ENCODE measurements at regions of chr11 and their contacts with region 1.

Region 1: DNA sequence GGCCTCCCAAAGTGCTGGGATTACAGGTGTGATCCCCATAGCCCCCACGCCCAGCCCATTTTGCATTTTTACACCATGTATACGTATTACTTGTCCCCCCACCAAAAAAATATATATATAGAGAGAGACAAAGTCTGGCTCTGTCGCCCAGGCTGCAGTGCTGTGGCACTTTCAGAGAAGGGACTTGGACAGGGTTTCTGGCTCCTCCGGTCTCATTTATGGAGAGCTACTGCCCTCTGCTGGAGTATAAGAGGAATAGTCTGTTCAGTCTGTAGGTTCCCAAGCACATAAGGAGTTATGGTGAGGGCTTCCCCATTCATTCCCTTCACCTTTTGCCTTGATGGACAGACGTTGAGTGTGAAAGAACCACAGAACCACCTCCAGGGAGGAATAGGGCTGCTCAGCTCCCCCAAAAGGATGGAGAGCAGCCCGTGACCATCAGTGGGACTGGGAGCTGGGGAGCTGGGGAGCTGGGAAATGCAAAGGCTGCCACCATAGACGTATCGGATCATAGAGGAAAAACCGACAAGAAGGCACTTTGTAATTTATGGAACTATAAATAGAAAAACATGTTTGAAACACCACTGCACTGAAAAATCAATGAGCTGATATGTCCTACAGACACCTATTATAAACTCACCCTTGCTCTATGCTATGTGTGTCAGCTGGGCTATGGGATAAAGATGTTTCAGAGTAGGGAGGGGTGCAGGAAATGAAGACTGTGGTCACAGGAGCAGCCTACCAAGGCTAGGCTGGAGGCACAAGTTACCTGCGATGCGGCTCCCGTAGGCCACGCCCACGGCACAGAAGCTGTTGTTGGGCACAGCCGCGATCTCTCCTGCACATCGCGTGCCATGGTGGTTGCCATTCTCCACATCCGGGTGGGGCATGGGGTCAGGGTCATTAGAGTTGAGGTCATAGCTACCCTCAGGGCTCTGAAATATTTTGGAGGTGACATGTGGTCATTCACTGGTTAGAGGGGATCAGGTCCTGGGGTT is 5.2 kb downstream of the PCSK7 start:
- DNase-seq: peak; percentile 90
- H3K4me3 ChIP-seq: no peak overlapping the region
- H3K27ac ChIP-seq: no peak overlapping the region
- H3K4me1 ChIP-seq: peaks cover 20% of the 10 kb centered on the region
- H3K27me3 ChIP-seq: no peaks in the 10 kb centered on the region
- CTCF ChIP-seq: peak; percentile 91

Region 2: DNA sequence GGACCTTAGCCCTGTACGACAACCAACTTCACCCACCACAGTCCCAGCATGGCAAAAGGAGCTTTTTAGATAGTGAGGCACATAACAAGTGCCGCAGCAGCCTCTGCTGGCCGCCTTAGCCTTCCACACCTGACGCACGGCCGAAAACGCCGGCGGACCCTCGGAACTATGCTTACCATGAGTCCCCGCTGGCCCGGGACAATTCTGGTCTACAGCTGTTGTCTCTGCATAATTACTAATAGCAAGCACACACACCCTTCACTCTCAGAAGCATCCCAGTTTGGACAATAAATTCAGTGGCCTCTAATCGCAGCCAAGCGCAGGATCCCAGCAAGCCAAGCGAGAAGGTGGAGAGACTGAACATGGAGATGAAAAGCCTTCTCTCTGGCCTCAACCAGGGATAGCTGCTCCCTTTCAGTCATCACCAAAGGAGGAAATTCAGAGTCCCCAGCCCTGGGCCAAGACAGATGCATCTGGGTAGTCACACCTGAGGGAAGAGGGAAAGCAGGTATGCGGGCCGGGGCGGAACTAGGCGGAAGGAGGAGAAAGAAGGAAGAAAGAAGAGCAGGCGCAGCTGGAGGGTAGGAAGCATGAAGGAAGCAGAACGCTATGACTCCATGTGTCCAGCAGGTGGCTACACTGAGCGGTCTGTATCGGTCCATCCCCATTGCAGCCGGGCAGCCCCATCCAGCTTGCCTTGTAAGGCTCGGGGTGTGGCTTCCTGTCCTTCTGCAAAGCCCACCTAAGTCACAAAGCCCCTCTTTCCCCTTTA is 494.2 kb before region 1 on chr11:
- CTCF ChIA-PET with region 1: interaction called, 4 read pairs
- POLR2A ChIA-PET with region 1: no interaction called
- intact Hi-C with region 1: loop called (anchors 5 kb)
- DNase-seq: peak; percentile 83
- H3K4me3 ChIP-seq: no peak overlapping the region
- H3K27ac ChIP-seq: no peak overlapping the region
- H3K4me1 ChIP-seq: no peaks in the 10 kb centered on the region
- H3K27me3 ChIP-seq: peaks cover 7% of the 10 kb centered on the region
- CTCF ChIP-seq: peak; percentile 88

Region 3: GRCh38 chr11:116879800-116880625 is 346.7 kb before region 1 on chr11:
- CTCF ChIA-PET with region 1: interaction called, 3 read pairs
- POLR2A ChIA-PET with region 1: no interaction called
- intact Hi-C with region 1: loop called (anchors 5 kb)
- DNase-seq: peak; percentile 84
- H3K4me3 ChIP-seq: no peak overlapping the region
- H3K27ac ChIP-seq: no peak overlapping the region
- H3K4me1 ChIP-seq: peaks cover 7% of the 10 kb centered on the region
- H3K27me3 ChIP-seq: no peaks in the 10 kb centered on the region
- CTCF ChIP-seq: peak; percentile 85

Region 4: DNA sequence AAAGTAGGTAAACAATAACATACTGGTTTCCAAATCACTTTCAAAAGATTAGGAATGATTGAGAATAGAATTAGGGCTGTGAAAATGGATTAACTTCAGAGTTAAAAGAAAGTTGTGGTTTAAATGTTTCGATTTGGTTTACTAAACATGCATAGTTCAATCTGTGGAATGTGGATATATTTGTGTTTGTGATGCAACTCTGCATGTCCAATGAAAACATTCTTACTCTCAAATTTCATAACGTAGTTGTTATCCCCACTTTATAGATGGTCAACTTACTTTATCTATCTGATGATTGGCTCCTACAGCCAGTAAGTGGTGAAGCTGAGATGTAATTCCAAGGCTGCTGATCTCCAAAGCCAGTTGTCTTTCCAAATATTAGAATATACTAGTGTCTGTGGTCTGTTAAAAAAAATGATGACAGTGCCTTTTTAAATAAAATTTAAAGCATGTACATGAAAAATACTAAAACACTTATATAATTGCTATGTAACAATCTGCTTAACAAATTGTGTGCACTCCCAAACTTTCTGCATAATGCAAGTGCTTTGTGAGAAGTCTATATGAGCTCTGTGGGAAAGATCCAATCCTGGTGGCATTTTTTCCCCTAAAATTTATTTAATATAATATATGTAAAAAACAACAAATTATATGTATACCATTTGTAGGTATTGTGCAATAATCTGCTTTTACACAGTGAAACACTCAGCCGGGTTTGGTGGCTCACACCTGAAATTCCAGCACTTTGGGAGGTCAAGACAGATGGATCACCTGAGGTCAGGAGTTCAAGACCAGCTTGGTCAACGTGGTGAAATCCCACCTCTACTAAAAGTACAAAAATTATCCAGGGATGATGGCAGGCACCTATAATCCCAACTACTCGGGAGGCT is 118.7 kb before region 1 on chr11:
- CTCF ChIA-PET with region 1: no interaction called
- POLR2A ChIA-PET with region 1: no interaction called
- intact Hi-C with region 1: loop called (anchors 1 kb)
- DNase-seq: no peak
- H3K4me3 ChIP-seq: no peak overlapping the region
- H3K27ac ChIP-seq: no peak overlapping the region
- H3K4me1 ChIP-seq: peaks cover 7% of the 10 kb centered on the region
- H3K27me3 ChIP-seq: no peaks in the 10 kb centered on the region
- CTCF ChIP-seq: no peak

Region 5: GRCh38 chr11:117178210-117179034 is 48.3 kb before region 1 on chr11 and contains the start of gene SIDT2:
- CTCF ChIA-PET with region 1: interaction called, 8 read pairs
- POLR2A ChIA-PET with region 1: no interaction called
- intact Hi-C with region 1: loop called (anchors 1 kb)
- DNase-seq: peak; percentile 98
- H3K4me3 ChIP-seq: peak within 1 kb of the TSS; percentile 70
- H3K27ac ChIP-seq: peak within 1 kb of the TSS; percentile 81
- H3K4me1 ChIP-seq: peaks cover 29% of the 10 kb centered on the region
- H3K27me3 ChIP-seq: no peaks in the 10 kb centered on the region
- CTCF ChIP-seq: no peak
- total RNA-seq, gene SIDT2: 33.5 and 43.6 TPM in 2 replicates

Measured in A673 (cell line).